K562 (cell line): ENCODE measurements at regions of chrX and their contacts with region 1.

Region 1: DNA sequence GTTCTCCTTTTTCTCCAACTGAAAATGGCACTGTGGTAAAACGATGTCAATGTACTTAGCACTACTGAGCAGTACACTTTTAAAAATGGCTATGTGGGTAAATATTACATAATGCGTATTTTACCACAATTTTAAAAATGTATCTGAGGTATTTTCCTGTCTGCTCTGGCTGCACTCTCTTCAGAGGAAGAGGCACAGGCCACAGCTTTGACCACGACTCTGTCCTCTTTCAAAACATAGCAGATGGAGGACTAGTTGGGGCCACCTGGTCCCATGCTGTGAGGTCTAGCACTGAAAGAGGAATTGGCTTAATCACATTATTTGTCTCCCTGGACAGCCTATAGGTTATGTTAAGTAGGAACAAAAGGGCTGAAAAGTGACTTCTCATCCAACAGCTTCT is 5.2 kb downstream of the KCNE5 start:
- DNase-seq: no peak
- ATAC-seq: no peak
- H3K4me3 ChIP-seq: no peak overlapping the region
- H3K27ac ChIP-seq: no peak overlapping the region
- H3K4me1 ChIP-seq: no peaks in the 10 kb centered on the region
- H3K27me3 ChIP-seq: no peaks in the 10 kb centered on the region
- CTCF ChIP-seq: no peak
- EP300 ChIP-seq: no peak
- POLR2A ChIP-seq: no peak
- RAD21 ChIP-seq: no peak

Region 2: GRCh38 chrX:109501176-109501575 is 118.6 kb before region 1 on chrX:
- CTCF ChIA-PET with region 1: no interaction called
- POLR2A ChIA-PET with region 1: no interaction called
- in situ Hi-C with region 1: loop called (anchors 10 kb)
- intact Hi-C with region 1: no loop called
- DNase-seq: no peak
- ATAC-seq: no peak
- H3K4me3 ChIP-seq: no peak overlapping the region
- H3K27ac ChIP-seq: no peak overlapping the region
- H3K4me1 ChIP-seq: no peaks in the 10 kb centered on the region
- H3K27me3 ChIP-seq: peaks cover 0 to 5% of the 10 kb centered on the region in 2 experiments; a peak in 3 of 5 replicates
- CTCF ChIP-seq: no peak
- EP300 ChIP-seq: no peak
- POLR2A ChIP-seq: no peak
- RAD21 ChIP-seq: no peak

Region 3: DNA sequence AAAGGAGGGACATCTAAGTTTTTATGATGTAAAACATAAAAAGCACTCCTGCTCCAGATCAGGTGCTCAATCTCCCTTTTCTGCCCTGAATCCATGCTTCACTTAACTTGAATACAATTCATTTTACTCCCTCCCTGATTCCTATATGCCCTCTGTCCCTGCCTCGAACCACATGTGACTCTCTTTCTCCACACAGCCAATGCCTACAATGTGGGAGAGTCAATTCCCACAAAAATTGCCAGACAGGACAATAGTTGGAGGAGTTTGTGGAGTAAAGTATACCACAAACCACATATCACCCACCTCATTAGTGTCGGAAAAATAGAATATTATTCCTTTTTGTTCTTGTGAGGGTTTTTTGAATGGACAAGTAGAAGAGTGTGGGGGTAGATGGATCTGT is 688.4 kb after region 1 on chrX:
- CTCF ChIA-PET with region 1: no interaction called
- POLR2A ChIA-PET with region 1: no interaction called
- in situ Hi-C with region 1: no loop called
- intact Hi-C with region 1: no loop called
- DNase-seq: no peak
- ATAC-seq: no peak
- H3K4me3 ChIP-seq: no peak overlapping the region
- H3K27ac ChIP-seq: no peak overlapping the region
- H3K4me1 ChIP-seq: peaks cover 8 to 21% of the 10 kb centered on the region in 2 experiments; a peak in 3 of 5 replicates
- H3K27me3 ChIP-seq: no peaks in the 10 kb centered on the region
- CTCF ChIP-seq: no peak
- EP300 ChIP-seq: no peak
- POLR2A ChIP-seq: no peak
- RAD21 ChIP-seq: no peak